Activated CD4-positive, alpha-beta T cell treated with anti-CD3 and anti-CD28 coated beads for 36 hours (primary cell): ENCODE measurements at regions of chr10 and their contacts with region 1.

Region 1: GRCh38 chr10:22648547-22648961 is 65.8 kb downstream of the PIP4K2A start:
- DNase-seq: no peak
- ATAC-seq: peak; percentile 8
- H3K4me3 Mint-ChIP-seq: peak overlapping the region; percentile 49
- H3K27ac Mint-ChIP-seq: peak overlapping the region; percentile 93
- H3K4me1 Mint-ChIP-seq: peaks cover 90% of the 10 kb centered on the region
- H3K27me3 Mint-ChIP-seq: no peaks in the 10 kb centered on the region

Region 2: DNA sequence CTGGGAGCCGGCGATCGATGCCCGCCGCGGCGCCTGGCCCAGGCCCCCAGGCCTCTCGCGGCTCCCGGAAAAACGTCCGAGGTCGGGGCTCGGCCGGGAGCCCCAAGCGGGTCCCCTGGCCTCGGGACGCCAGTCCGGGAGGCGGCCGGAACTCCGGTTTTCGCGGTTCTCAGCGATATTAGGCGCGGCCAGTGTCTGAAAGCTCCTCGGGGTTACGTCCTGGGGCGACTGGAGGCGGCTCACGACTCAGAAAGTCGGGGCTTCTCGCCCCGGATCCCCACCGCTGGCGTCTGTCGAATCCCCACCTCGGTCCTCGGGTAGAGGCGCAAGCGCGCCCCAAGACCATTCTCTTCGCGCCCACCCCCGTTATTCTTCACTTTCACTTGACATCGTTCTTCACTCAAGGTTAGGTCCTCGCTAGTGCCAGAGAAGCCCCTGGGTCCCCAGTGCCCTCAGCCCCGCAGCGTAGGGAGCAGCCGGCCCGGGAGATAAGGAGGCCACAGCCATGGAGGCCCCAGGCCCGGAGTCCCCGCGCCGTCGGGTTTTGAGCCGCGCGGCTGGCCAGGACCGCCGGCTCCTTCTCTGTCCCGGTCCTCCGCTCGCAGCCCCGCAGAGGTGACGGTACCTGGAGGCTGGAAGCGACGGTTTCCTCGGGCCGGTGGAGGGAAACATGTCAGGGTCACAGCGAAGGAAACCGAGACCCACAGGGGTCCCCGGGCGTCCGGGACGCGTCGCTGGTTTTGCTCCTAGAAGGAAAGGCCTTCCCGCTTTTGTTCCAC is 395.6 kb before region 1 on chr10:
- CTCF ChIA-PET with region 1: no interaction called
- POLR2A ChIA-PET with region 1: no interaction called
- intact Hi-C with region 1: no loop called
- DNase-seq: peak; percentile 59
- ATAC-seq: peak; percentile 22
- H3K4me3 Mint-ChIP-seq: peak overlapping the region; percentile 93
- H3K27ac Mint-ChIP-seq: peak overlapping the region; percentile 91
- H3K4me1 Mint-ChIP-seq: peaks cover 27% of the 10 kb centered on the region
- H3K27me3 Mint-ChIP-seq: peaks cover 9% of the 10 kb centered on the region

Region 3: DNA sequence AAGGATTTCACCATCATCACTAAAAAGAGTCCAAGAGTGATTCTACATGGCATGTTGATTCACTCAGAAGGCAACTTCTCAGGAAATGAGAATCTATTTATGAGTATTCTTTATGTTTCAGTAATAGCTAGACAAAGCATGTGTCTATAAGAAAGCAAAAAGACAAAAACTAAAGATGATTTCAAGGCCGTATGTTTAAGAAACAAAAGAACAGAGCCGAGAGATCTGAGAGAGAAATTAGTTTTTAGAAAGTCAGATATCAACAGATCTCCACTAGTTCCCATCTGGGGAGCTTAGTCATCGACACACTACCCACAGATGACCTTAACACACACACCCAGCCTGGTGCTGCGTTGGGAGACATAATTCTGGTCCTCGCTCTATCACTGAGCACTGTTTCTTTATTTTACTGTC is 44.8 kb after region 1 on chr10:
- CTCF ChIA-PET with region 1: no interaction called
- POLR2A ChIA-PET with region 1: no interaction called
- intact Hi-C with region 1: loop called in 1 of 2 experiments (anchors 1 kb)
- DNase-seq: peak; percentile 51
- ATAC-seq: peak; percentile 87
- H3K4me3 Mint-ChIP-seq: peak overlapping the region; percentile 46
- H3K27ac Mint-ChIP-seq: peak overlapping the region; percentile 97
- H3K4me1 Mint-ChIP-seq: peaks cover 91% of the 10 kb centered on the region
- H3K27me3 Mint-ChIP-seq: no peaks in the 10 kb centered on the region